MCF 10A (cell line): ENCODE measurements at regions of chr5 and their contacts with region 1.

Region 1: GRCh38 chr5:151651997-151652645 is 34.6 kb downstream of the SPARC start:
- DNase-seq: peak; percentile 94
- H3K4me3 Mint-ChIP-seq: no peak overlapping the region
- H3K27ac Mint-ChIP-seq: no peak overlapping the region
- H3K4me1 Mint-ChIP-seq: peaks cover 10% of the 10 kb centered on the region
- H3K27me3 Mint-ChIP-seq: no peaks in the 10 kb centered on the region
- CTCF ChIP-seq: peak; percentile 99

Region 2: DNA sequence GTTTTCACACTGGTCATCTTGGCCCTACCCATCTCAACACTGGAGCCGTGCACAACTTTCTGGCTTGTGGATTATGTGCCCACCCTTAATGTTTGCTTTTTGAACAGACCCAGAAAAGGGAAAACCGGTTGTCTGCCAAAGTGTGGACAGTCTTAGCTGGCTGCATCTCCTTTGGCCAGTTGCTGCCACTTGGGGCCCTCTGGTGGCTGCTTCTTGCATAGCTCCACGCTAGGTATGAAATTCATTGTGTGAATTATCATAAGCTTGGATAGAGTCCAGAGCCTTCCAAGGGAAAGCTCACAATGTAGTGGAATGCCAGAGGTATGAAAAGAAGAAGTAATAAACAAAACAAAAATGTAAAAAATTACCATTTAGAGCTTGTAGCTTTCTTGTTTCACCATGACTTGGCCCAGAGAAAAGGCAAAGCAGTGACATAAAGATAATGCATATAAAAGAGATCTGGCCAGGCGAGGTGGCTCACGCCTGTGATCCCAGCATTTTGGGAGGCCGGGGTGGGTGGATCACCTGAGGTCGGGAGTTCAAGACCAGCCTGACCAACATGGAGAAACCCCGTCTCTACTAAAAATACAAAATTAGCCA is 336.0 kb before region 1 on chr5:
- CTCF ChIA-PET with region 1: interaction called, 7 read pairs
- POLR2A ChIA-PET with region 1: interaction called, 4 read pairs
- intact Hi-C with region 1: loop called (anchors 5 kb)
- DNase-seq: peak; percentile 88
- H3K4me3 Mint-ChIP-seq: no peak overlapping the region
- H3K27ac Mint-ChIP-seq: no peak overlapping the region
- H3K4me1 Mint-ChIP-seq: no peaks in the 10 kb centered on the region
- H3K27me3 Mint-ChIP-seq: peaks cover 13% of the 10 kb centered on the region
- CTCF ChIP-seq: peak; percentile 97

Region 3: DNA sequence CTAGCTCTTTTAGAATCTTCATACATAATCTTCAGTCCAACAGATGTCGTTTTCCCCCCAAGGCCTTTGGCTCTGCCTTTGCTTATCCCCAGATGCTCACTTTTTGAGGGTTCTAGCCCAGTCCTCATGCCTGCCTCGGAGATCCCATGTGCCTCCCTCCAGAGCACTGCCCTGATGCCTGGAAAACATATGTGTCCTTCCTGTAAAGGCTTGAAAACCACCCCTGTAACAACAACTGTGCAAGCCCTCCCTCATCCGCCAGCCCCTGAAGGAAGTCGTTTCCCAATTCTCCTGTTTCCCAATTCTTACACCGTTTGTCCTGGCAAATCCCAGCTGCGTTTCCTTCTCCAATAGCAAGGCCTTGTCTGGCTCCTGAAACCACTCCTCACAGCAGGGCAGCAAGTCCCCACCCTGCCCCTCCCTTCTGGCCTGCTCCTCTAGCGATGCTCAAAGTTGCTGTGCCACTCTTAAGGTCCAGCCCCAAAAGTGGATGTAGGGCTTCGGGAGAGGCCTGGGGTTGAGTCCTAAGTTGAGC is 152.6 kb before region 1 on chr5:
- CTCF ChIA-PET with region 1: interaction called, 71 read pairs
- POLR2A ChIA-PET with region 1: no interaction called
- intact Hi-C with region 1: loop called (anchors 1 kb)
- DNase-seq: peak; percentile 46
- H3K4me3 Mint-ChIP-seq: no peak overlapping the region
- H3K27ac Mint-ChIP-seq: no peak overlapping the region
- H3K4me1 Mint-ChIP-seq: no peaks in the 10 kb centered on the region
- H3K27me3 Mint-ChIP-seq: no peaks in the 10 kb centered on the region
- CTCF ChIP-seq: no peak

Region 4: GRCh38 chr5:151550146-151550545 is 102.0 kb before region 1 on chr5:
- CTCF ChIA-PET with region 1: interaction called, 467 read pairs
- POLR2A ChIA-PET with region 1: interaction called, 5 read pairs
- intact Hi-C with region 1: no loop called
- DNase-seq: peak; percentile 79
- H3K4me3 Mint-ChIP-seq: no peak overlapping the region
- H3K27ac Mint-ChIP-seq: no peak overlapping the region
- H3K4me1 Mint-ChIP-seq: peaks cover 13% of the 10 kb centered on the region
- H3K27me3 Mint-ChIP-seq: no peaks in the 10 kb centered on the region
- CTCF ChIP-seq: no peak

Region 5: DNA sequence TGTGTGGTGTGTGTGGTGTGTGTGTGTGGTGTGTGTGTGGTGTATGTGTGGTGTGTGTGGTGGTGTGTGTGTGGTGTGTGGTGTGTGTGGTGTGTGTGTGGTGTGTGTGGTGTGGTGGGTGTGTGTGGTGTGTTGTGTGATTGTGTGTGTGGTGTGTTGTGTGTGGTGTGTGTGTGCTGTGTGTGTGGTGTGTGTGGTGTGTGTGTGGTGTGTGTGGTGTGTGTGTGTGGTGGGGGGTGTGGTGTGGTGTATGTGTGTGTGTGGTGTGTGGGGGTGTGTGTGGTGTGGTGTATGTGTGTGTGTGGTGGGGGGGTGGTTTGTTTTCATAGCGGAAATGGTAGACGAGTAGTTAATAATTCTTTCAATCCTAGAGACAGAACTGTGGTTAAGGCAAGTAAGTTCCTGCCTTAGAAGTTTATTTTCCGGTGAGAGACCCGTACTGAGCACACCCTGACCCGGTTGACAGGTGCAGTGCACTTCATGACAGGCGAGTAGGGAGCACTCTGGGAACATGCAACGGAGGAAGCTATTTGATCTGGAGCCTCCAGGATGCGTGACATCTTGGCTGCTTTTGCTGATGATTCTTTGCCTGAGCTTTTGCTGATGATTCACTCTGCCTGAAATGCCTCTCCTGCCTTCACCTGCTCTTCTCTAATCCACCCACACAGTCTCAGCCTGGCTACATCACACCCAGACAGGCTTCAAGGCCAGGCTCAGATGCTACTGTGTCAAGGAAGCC is 39.3 kb before region 1 on chr5:
- CTCF ChIA-PET with region 1: interaction called, 174 read pairs
- POLR2A ChIA-PET with region 1: interaction called, 47 read pairs
- intact Hi-C with region 1: no loop called
- DNase-seq: peak; percentile 93
- H3K4me3 Mint-ChIP-seq: no peak overlapping the region
- H3K27ac Mint-ChIP-seq: peak overlapping the region; percentile 30
- H3K4me1 Mint-ChIP-seq: peaks cover 56% of the 10 kb centered on the region
- H3K27me3 Mint-ChIP-seq: no peaks in the 10 kb centered on the region
- CTCF ChIP-seq: no peak

Region 6: DNA sequence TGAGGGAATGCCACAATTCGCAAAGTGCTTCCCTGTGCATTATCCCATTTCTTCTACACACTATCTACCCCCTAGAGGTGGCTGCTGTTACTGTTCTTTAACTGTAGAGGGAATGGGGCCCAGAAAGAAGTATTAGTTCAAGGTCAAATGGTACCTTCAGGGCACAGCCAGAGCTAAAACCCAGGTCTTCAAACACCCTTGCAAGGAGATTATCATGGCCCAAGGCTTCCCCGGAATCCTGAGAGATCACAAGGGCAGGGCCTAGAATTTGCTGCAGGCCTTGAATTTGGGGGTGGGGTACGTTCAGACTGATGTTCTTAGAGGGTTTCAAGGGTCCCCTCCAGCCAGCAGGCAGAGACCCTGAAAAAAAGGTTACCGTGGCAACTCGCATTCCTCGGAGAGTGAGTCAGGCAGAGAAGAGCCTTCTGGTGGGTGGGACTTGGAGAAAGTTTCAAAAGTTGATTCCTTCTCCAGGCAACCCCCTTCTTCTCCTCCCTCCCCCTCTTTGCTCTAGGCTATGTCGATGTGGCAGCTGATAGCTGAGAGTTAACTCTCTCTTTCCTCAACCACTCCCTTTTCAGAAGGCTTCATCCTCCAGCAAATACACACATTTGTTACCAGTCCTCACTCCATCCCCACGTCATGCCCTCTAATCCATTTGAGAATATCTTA is 32.7 kb after region 1 on chr5:
- CTCF ChIA-PET with region 1: interaction called, 30 read pairs
- POLR2A ChIA-PET with region 1: no interaction called
- intact Hi-C with region 1: no loop called
- DNase-seq: peak; percentile 88
- H3K4me3 Mint-ChIP-seq: peak overlapping the region; percentile 26
- H3K27ac Mint-ChIP-seq: peak overlapping the region; percentile 84
- H3K4me1 Mint-ChIP-seq: peaks cover 45% of the 10 kb centered on the region
- H3K27me3 Mint-ChIP-seq: no peaks in the 10 kb centered on the region
- CTCF ChIP-seq: peak; percentile 25

Region 7: GRCh38 chr5:151923866-151924476 is 271.9 kb after region 1 on chr5:
- CTCF ChIA-PET with region 1: no interaction called
- POLR2A ChIA-PET with region 1: no interaction called
- intact Hi-C with region 1: no loop called
- DNase-seq: peak; percentile 21
- H3K4me3 Mint-ChIP-seq: no peak overlapping the region
- H3K27ac Mint-ChIP-seq: no peak overlapping the region
- H3K4me1 Mint-ChIP-seq: no peaks in the 10 kb centered on the region
- H3K27me3 Mint-ChIP-seq: peaks cover 34% of the 10 kb centered on the region
- CTCF ChIP-seq: peak; percentile 31